CD4-positive, alpha-beta T cell (primary cell): ENCODE measurements at regions of chr1 and their contacts with region 1.

Region 1: DNA sequence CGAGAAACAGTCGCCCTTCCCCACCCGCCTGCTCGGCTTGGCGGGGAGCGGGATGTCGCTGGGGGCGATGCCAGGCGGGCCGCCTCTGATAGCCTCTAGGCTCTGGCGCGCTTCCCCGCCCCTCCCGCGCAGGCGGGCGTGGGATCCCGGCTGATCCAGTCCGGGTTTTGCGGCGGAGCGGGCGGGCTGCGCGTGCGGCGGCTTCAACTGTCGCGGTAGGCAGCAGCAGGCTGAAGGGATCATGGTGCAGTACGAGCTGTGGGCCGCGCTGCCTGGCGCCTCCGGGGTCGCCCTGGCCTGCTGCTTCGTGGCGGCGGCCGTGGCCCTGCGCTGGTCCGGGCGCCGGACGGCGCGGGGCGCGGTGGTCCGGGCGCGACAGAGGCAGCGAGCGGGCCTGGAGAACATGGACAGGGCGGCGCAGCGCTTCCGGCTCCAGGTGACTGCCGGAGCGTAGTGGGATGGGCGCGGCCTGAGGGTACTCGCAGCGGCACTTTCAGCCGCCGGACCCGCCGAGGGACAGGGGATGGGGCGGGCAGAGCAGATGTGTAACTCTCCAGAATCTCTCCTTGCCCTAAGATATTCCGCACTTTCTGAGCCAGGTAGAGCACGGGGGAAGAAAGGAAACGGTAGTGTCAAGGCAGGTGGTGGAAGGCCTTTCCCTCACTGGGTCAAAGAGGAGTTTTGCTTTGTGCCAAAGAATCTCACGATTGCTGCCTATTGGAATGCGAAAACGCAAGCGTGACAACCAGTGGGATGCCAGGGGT is at the start of gene FAAH:
- DNase-seq: peak in 13 of 14 experiments; percentile 12 to 74 (median 40)
- ATAC-seq: peak; percentile 92
- H3K4me3 ChIP-seq: peak within 1 kb of the TSS; percentile 62
- H3K4me3 Mint-ChIP-seq: peak within 1 kb of the TSS; percentile 88
- H3K27ac ChIP-seq: no peak within 1 kb of the TSS
- H3K27ac Mint-ChIP-seq: peak within 1 kb of the TSS; percentile 51
- H3K4me1 ChIP-seq: peaks cover 7% of the 10 kb centered on the region
- H3K4me1 Mint-ChIP-seq: peaks cover 25% of the 10 kb centered on the region
- H3K27me3 ChIP-seq: peaks cover 0 to 3% of the 10 kb centered on the region in 2 experiments
- H3K27me3 Mint-ChIP-seq: peaks cover 10% of the 10 kb centered on the region
- CTCF ChIP-seq: no peak
- total RNA-seq, gene FAAH: 11.7 to 15.0 TPM

Region 2: GRCh38 chr1:46379996-46380395 is 14.3 kb before region 1 on chr1:
- CTCF ChIA-PET with region 1: no interaction called
- POLR2A ChIA-PET with region 1: no interaction called
- intact Hi-C with region 1: no loop called
- DNase-seq: no peak
- ATAC-seq: no peak
- H3K4me3 ChIP-seq: no peak overlapping the region
- H3K4me3 Mint-ChIP-seq: no peak overlapping the region
- H3K27ac ChIP-seq: no peak overlapping the region
- H3K27ac Mint-ChIP-seq: no peak overlapping the region
- H3K4me1 ChIP-seq: no peaks in the 10 kb centered on the region
- H3K4me1 Mint-ChIP-seq: no peaks in the 10 kb centered on the region
- H3K27me3 ChIP-seq: no peaks in the 10 kb centered on the region
- H3K27me3 Mint-ChIP-seq: no peaks in the 10 kb centered on the region
- CTCF ChIP-seq: no peak

Region 3: DNA sequence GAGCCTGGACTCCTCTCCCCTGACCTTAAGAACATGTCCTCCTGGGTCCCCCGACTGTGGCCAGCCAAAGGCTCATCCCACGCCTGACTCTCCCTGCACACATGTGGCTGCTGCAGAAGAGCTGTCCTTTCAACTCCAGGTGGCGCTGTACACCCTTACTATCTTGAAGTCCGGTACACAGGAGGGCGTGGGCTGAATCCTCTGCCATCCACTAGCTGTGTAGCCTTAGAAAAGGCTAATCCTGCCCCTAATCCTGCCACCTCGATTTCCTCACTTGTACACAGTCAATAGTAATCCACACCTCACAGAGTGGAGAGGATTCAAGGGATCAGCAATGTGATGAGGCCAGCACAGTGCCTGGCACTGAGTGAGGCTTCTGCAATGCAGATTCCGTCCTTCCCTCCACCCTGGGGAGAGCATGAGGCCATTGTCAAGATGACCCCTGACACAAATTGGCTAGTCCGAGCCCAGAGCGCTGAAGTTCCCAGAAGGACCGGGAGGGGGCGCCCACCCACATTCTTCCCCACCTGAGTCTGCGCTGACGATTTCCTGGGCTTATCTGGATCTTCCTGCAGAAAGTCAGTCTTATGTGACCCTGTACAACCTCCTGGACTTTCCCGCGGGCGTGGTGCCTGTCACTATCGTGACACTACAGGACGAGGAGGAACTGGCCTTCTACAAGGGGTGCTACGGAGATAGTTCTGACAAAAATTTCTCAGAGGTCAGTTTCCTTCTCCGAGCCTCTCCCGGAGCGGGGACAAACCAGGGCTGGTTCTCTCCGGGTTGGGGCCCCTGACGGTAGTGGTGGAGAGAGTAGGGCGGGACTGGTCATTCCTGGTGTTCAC is 48.2 kb after region 1 on chr1:
- CTCF ChIA-PET with region 1: no interaction called
- POLR2A ChIA-PET with region 1: no interaction called
- intact Hi-C with region 1: loop called in 1 of 2 experiments (anchors 2 kb)
- DNase-seq: peak; percentile 47 to 80 (median 62)
- ATAC-seq: peak; percentile 79
- H3K4me3 ChIP-seq: peak overlapping the region; percentile 49
- H3K4me3 Mint-ChIP-seq: peak overlapping the region; percentile 87
- H3K27ac ChIP-seq: no peak overlapping the region
- H3K27ac Mint-ChIP-seq: no peak overlapping the region
- H3K4me1 ChIP-seq: peaks cover 21% of the 10 kb centered on the region
- H3K4me1 Mint-ChIP-seq: peaks cover 20% of the 10 kb centered on the region
- H3K27me3 ChIP-seq: peaks cover 9 to 18% of the 10 kb centered on the region in 2 experiments
- H3K27me3 Mint-ChIP-seq: peaks cover 26% of the 10 kb centered on the region
- CTCF ChIP-seq: peak; percentile 92